ENCODE measurements at regions of chr12 and their contacts with region 1.

Region 1: GRCh38 chr12:68745904-68746571 is at the start of gene SLC35E3:
- DNase-seq: peak; percentile 88
- ATAC-seq: peak; percentile 96
- H3K4me3 Mint-ChIP-seq: peak within 1 kb of the TSS; percentile 98
- H3K27ac Mint-ChIP-seq: peak within 1 kb of the TSS; percentile 95
- H3K4me1 Mint-ChIP-seq: peaks cover 50% of the 10 kb centered on the region
- H3K27me3 Mint-ChIP-seq: no peaks in the 10 kb centered on the region
- CTCF ChIP-seq: no peak
- total RNA-seq, gene SLC35E3: 7.8 and 9.5 TPM in 2 replicates

Region 2: DNA sequence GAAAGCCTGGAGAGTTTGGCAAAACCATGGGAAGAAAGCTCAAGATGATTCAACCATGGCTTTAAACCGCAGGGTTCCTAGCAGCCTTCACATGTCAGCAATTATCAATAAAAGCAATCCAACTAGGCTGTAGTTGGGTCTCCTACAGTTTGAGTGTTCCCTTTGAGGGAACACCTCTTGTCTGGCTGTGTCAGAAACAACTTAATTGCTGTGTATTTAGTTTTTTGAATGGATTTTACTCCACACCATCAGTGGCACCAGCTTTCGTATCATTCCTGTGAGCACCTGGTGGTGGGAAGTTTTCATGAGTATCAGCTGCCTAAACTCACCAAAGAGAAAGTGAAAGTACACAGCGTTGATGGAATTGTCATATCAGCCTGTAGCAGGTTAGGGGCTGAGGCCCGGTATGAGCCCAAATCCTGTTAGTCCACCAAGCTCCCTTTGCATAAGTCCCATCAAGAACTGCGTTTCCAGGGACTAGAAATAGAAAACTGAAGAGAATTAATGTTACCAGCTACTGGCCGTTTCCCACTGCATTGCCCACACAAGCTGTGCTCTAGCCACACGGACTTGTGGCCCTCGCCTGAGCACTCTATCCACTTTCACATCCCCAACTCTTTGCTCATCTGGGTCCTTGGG is 509.5 kb before region 1 on chr12:
- CTCF ChIA-PET with region 1: no interaction called
- POLR2A ChIA-PET with region 1: no interaction called
- intact Hi-C with region 1: loop called (anchors 5 kb)
- DNase-seq: peak; percentile 22
- ATAC-seq: peak; percentile 73
- H3K4me3 Mint-ChIP-seq: peak overlapping the region; percentile 88
- H3K27ac Mint-ChIP-seq: peak overlapping the region; percentile 92
- H3K4me1 Mint-ChIP-seq: peaks cover 32% of the 10 kb centered on the region
- H3K27me3 Mint-ChIP-seq: no peaks in the 10 kb centered on the region
- CTCF ChIP-seq: no peak

Region 3: DNA sequence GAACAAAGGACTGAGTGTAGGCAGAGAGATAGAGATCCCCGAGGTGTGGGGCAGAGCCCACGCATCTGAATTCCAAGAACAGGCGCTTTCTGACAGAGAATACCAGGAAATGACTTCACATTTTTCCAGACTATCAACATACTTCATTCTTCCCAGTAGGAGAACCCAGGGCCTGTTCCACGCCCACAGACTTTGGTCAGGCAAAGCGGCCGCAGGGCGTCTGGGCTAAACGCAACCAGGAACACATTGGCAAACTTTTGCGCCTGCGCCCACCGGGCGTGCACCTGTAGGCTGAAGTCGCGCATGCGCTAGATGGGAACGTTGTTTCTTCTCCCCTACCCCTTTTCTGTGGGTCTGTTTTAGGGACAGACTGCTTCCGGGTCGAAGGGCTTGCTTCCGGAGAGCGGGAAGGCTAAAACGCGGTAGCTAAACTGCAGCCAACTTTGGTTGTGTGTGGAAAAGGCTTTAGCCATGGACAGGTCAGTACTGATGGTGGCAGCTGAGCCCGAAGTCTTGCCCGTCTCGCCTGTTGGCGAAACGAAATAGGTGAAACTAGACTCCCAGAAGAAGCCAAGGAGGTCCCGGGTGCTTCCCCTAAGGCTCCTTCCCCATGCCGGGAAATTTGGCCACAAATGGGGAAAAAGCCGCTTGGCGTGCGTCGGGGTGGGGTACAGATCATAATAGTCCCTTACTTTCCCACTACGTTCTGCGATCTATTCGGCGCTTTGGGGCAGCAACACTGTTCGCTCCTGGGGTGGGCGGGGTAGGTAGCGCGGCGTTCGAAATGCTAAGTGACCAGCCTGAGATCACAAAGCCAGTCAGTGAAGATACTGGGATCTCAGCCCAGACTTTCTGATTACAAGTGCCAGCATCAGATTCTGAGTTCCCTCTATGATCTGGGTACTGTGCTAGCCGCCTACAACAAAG is 59.2 kb before region 1 on chr12 and contains the start of gene NUP107:
- CTCF ChIA-PET with region 1: no interaction called
- POLR2A ChIA-PET with region 1: interaction called, 3 read pairs
- intact Hi-C with region 1: loop called (anchors 1 kb)
- DNase-seq: peak; percentile 93
- ATAC-seq: peak; percentile 97
- H3K4me3 Mint-ChIP-seq: peak within 1 kb of the TSS; percentile 98
- H3K27ac Mint-ChIP-seq: peak within 1 kb of the TSS; percentile 97
- H3K4me1 Mint-ChIP-seq: peaks cover 33% of the 10 kb centered on the region
- H3K27me3 Mint-ChIP-seq: no peaks in the 10 kb centered on the region
- CTCF ChIP-seq: no peak
- total RNA-seq, gene NUP107: 75.0 and 90.8 TPM in 2 replicates

Region 4: DNA sequence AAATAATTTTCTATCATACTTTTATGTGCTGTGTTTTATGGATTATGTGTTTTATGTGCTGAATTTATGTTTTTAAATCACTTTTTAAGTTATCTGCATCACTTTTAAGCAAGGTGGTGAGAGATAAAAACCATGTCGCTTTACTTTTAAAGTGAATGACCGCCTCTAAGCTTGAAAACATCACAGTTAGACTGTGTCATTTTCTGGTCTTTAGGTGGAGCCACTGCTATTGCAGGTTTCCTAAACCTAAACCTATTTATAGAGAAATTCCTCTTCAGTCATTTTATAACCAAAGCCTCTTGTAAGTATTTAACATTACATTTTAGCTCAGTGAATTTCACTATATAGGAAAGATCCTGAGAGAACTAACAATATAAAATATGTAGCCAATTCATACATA is 40.9 kb after region 1 on chr12:
- CTCF ChIA-PET with region 1: no interaction called
- POLR2A ChIA-PET with region 1: interaction called, 3 read pairs
- intact Hi-C with region 1: loop called (anchors 1 kb)
- DNase-seq: no peak
- ATAC-seq: no peak
- H3K4me3 Mint-ChIP-seq: no peak overlapping the region
- H3K27ac Mint-ChIP-seq: no peak overlapping the region
- H3K4me1 Mint-ChIP-seq: peaks cover 16% of the 10 kb centered on the region
- H3K27me3 Mint-ChIP-seq: no peaks in the 10 kb centered on the region
- CTCF ChIP-seq: no peak